IMR-90 (cell line): ENCODE measurements at regions of chr10 and their contacts with region 1.

Region 1: GRCh38 chr10:101441541-101442455 is 87.8 kb downstream of the BTRC start:
- DNase-seq: peak; percentile 78
- ATAC-seq: peak; percentile 97
- H3K4me3 ChIP-seq: no peak overlapping the region
- H3K27ac ChIP-seq: no peak overlapping the region
- H3K4me1 ChIP-seq: no peaks in the 10 kb centered on the region
- H3K27me3 ChIP-seq: no peaks in the 10 kb centered on the region
- CTCF ChIP-seq: peak; percentile 69
- POLR2A ChIP-seq: no peak
- RAD21 ChIP-seq: peak; percentile 83

Region 2: GRCh38 chr10:101297901-101298486 is 143.8 kb before region 1 on chr10:
- CTCF ChIA-PET with region 1: interaction called, 4 read pairs
- POLR2A ChIA-PET with region 1: no interaction called
- dilution Hi-C with region 1: no loop called
- in situ Hi-C with region 1: loop called (anchors 25 kb)
- intact Hi-C with region 1: loop called (anchors 5 kb)
- DNase-seq: peak; percentile 39
- ATAC-seq: peak; percentile 89
- H3K4me3 ChIP-seq: no peak overlapping the region
- H3K27ac ChIP-seq: no peak overlapping the region
- H3K4me1 ChIP-seq: no peaks in the 10 kb centered on the region
- H3K27me3 ChIP-seq: peaks cover 68% of the 10 kb centered on the region
- CTCF ChIP-seq: peak; percentile 67
- POLR2A ChIP-seq: no peak
- RAD21 ChIP-seq: no peak

Region 3: DNA sequence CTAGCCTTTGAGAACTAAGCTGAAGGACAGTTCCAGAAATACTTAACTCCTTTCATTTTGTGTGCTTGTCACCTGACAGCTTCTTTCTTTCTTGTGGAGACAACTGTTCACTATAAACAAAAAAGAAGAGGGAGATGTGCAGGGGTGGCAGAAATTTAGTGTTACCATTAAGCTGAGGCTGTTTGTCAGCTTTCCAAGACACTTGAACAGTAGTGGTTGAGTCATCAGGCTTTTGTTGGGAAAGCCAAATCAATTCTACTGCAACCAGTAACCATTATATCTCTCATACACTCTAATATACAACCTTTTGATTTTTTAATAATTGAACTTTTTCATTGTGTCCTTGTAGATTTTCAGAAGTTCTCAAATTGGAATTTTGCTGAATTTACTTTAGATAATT is 70.9 kb after region 1 on chr10:
- CTCF ChIA-PET with region 1: no interaction called
- POLR2A ChIA-PET with region 1: no interaction called
- dilution Hi-C with region 1: no loop called
- in situ Hi-C with region 1: no loop called
- intact Hi-C with region 1: no loop called
- DNase-seq: peak; percentile 78
- ATAC-seq: peak; percentile 72
- H3K4me3 ChIP-seq: no peak overlapping the region
- H3K27ac ChIP-seq: no peak overlapping the region
- H3K4me1 ChIP-seq: 0 out of 2 replicates have a peak, but pooled peaks cover 2% of the 10 kb centered on the region
- H3K27me3 ChIP-seq: no peaks in the 10 kb centered on the region
- CTCF ChIP-seq: no peak
- POLR2A ChIP-seq: no peak
- RAD21 ChIP-seq: no peak